ENCODE measurements at regions of chr3 and their contacts with region 1.

Region 1: GRCh38 chr3:168165390-168166269 is 69.9 kb upstream of the GOLIM4 start:
- DNase-seq: no peak
- H3K4me3 ChIP-seq: no peak overlapping the region
- H3K27ac ChIP-seq: no peak overlapping the region
- H3K4me1 ChIP-seq: no peaks in the 10 kb centered on the region
- H3K27me3 ChIP-seq: no peaks in the 10 kb centered on the region
- CTCF ChIP-seq: peak in 2 of 3 experiments; percentile 75 to 85; a peak in 3 of 4 replicates
- EP300 ChIP-seq: no peak
- POLR2A ChIP-seq: no peak
- RAD21 ChIP-seq: peak; percentile 85 to 89

Region 2: GRCh38 chr3:167929968-167930367 is 235.7 kb before region 1 on chr3:
- CTCF ChIA-PET with region 1: interaction called, 15 read pairs
- POLR2A ChIA-PET with region 1: no interaction called
- DNase-seq: no peak
- H3K4me3 ChIP-seq: no peak overlapping the region
- H3K27ac ChIP-seq: no peak overlapping the region
- H3K4me1 ChIP-seq: no peaks in the 10 kb centered on the region
- H3K27me3 ChIP-seq: no peaks in the 10 kb centered on the region
- CTCF ChIP-seq: no peak
- EP300 ChIP-seq: no peak
- POLR2A ChIP-seq: no peak
- RAD21 ChIP-seq: no peak

Region 3: DNA sequence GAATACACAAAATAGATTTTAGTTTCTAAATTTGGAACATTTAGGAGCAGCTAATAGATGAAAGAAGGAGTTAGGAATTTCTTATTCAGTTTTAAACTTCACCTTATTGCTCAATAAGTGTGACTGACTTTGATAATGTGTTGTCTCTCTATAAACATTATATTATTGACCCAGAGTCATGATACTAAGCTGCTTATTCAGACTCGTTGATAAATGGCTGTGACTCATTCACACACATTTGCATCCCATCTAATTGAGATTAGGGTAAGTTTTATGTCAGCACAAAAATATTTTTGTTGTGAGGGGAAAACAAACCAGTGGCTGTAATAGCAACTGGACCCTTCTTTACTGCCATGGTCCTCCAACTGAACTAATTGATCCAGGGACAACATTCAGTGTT is 207.5 kb before region 1 on chr3:
- CTCF ChIA-PET with region 1: no interaction called
- POLR2A ChIA-PET with region 1: no interaction called
- DNase-seq: no peak
- H3K4me3 ChIP-seq: no peak overlapping the region
- H3K27ac ChIP-seq: no peak overlapping the region
- H3K4me1 ChIP-seq: peaks cover 0 to 2% (median 0%) of the 10 kb centered on the region in 4 experiments; a peak in 1 of 7 replicates
- H3K27me3 ChIP-seq: no peaks in the 10 kb centered on the region
- CTCF ChIP-seq: no peak
- EP300 ChIP-seq: no peak
- POLR2A ChIP-seq: no peak
- RAD21 ChIP-seq: no peak

Region 4: GRCh38 chr3:168047190-168047795 is 118.3 kb before region 1 on chr3:
- CTCF ChIA-PET with region 1: interaction called, 79 read pairs
- POLR2A ChIA-PET with region 1: interaction called, 5 read pairs
- DNase-seq: no peak
- H3K4me3 ChIP-seq: no peak overlapping the region
- H3K27ac ChIP-seq: no peak overlapping the region
- H3K4me1 ChIP-seq: peaks cover 0 to 3% (median under 1%) of the 10 kb centered on the region in 4 experiments; a peak in 2 of 7 replicates
- H3K27me3 ChIP-seq: no peaks in the 10 kb centered on the region
- CTCF ChIP-seq: peak in 2 of 3 experiments; percentile 68 to 79; a peak in 2 of 4 replicates
- EP300 ChIP-seq: no peak
- POLR2A ChIP-seq: no peak
- RAD21 ChIP-seq: peak; percentile 85 to 86

Region 5: GRCh38 chr3:168061332-168061996 is 104.2 kb before region 1 on chr3:
- CTCF ChIA-PET with region 1: interaction called, 15 read pairs
- POLR2A ChIA-PET with region 1: no interaction called
- DNase-seq: no peak
- H3K4me3 ChIP-seq: no peak overlapping the region
- H3K27ac ChIP-seq: no peak overlapping the region
- H3K4me1 ChIP-seq: no peaks in the 10 kb centered on the region
- H3K27me3 ChIP-seq: no peaks in the 10 kb centered on the region
- CTCF ChIP-seq: no peak
- EP300 ChIP-seq: no peak
- POLR2A ChIP-seq: no peak
- RAD21 ChIP-seq: no peak

Region 6: GRCh38 chr3:168112894-168113293 is 52.7 kb before region 1 on chr3:
- CTCF ChIA-PET with region 1: interaction called, 15 read pairs
- POLR2A ChIA-PET with region 1: no interaction called
- DNase-seq: no peak
- H3K4me3 ChIP-seq: no peak overlapping the region
- H3K27ac ChIP-seq: no peak overlapping the region
- H3K4me1 ChIP-seq: no peaks in the 10 kb centered on the region
- H3K27me3 ChIP-seq: no peaks in the 10 kb centered on the region
- CTCF ChIP-seq: no peak
- EP300 ChIP-seq: no peak
- POLR2A ChIP-seq: no peak
- RAD21 ChIP-seq: no peak

Region 7: GRCh38 chr3:168322941-168323340 is 157.3 kb after region 1 on chr3:
- CTCF ChIA-PET with region 1: no interaction called
- POLR2A ChIA-PET with region 1: no interaction called
- DNase-seq: no peak
- H3K4me3 ChIP-seq: no peak overlapping the region
- H3K27ac ChIP-seq: no peak overlapping the region
- H3K4me1 ChIP-seq: no peaks in the 10 kb centered on the region
- H3K27me3 ChIP-seq: no peaks in the 10 kb centered on the region
- CTCF ChIP-seq: no peak
- EP300 ChIP-seq: no peak
- POLR2A ChIP-seq: no peak
- RAD21 ChIP-seq: no peak